ENCODE measurements at regions of chr9 and their contacts with region 1.

Region 1: DNA sequence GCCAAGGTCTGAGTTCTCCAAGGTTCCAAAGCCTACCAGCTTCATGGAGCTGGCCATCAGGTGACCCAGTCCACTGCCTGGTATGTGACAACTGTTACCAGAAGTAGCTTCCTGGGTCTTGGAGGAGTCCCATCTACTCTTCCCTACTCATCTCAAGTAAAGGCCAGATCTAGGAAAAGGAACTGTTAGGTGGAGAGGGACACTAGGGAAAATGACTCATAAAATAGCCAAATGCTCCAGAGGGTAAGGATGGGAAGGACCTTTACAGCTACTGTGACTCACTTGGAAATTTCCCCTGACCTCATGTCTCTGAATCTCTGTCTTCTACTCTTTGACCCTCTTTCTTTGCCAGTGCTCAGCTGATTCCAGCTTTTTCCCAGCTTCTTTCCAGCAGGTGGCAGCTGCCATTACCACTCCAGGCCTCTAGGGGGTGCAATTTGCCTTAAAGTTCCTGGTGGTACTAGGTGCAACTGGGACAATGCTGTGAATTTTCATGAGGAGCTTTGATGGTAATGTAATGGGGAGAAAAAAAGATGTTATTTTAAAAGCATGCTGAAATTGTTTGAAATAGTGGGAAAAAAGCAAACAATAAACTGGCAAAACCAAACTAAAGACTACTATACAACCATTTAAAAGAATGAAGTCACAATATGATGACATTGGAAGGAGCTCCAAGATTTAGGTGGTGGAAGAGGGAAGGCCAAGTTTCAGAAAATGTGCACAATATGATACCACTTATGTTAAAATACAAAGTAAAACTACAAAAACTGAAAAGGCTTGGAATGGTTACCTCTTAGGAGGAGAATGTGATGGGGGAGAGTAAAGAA is 27.1 kb upstream of the MYORG start:
- DNase-seq: peak; percentile 72 to 75
- H3K4me3 ChIP-seq: no peak overlapping the region
- H3K27ac ChIP-seq: no peak overlapping the region
- H3K4me1 ChIP-seq: no peaks in the 10 kb centered on the region
- H3K27me3 ChIP-seq: no peaks in the 10 kb centered on the region
- CTCF ChIP-seq: peak; percentile 89 to 91

Region 2: DNA sequence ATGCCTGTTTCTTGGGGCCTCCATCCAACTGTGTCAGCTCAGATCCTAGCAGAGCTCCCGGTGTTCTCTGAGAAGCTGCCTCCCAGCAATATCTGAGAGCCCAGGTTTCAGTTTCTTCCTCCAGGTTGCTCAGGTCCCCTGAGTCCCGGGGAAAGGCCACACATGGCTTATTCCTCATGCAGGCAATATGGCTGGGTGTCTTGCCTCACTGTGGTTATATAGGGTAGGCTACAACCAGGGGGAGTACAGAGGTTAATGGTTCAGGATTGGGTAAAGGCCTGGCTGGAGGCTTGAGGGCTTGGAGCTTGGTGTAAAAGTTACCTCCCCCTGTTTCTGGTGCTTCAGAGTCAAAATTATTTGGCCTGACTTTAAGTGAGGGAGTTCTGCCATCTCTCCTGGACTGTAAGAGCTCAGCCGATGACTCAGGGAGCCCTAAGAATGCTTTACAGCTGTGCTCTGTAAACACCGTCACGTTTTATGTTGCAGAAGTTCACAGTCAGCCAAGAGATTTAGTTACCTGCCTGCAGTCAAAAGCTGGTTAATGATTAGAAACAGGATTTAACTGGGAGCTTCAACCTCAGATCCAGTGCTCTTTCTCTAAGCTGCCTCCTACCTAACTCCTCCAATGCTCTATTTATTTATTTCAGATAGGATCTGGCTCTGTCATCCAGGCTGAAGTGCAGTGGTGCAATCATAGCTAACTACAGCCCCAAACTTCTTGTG is 330.7 kb before region 1 on chr9:
- intact Hi-C with region 1: no loop called
- DNase-seq: no peak
- H3K4me3 ChIP-seq: no peak overlapping the region
- H3K27ac ChIP-seq: no peak overlapping the region
- H3K4me1 ChIP-seq: peaks cover 0 to 20% (median 0%) of the 10 kb centered on the region in 4 donors
- H3K27me3 ChIP-seq: no peaks in the 10 kb centered on the region
- CTCF ChIP-seq: no peak

Region 3: DNA sequence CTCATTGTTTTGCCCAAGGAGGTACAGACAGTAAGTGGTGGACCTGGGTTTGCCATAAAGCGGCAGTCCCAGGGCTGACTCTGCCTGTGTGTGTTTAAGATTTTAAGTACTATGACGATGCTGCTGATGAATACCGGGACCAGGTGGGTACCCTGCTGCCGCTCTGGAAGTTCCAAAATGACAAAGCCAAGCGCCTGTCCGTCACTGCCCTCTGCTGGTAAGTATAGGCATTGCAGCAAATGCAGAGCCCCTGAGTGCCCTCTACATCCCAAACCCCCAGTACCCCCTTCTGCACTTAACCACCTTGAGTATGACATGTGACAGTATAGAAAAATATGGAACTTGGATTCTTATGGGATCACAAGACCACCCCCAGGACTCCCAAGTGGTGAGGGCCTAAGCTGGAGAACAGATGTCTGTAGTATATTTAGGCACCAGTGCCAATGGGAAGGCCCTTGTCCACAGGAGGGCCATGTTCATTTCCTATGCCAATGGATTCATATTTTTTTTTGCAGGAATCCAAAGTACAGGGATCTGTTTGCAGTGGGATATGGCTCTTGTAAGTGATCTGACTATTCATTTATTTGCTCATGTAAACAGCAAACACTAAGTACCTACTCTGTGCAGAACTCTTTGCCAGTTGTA is 97.0 kb after region 1 on chr9:
- intact Hi-C with region 1: loop called (anchors 5 kb)
- DNase-seq: peak in 1 of 2 donors; percentile 44
- H3K4me3 ChIP-seq: no peak overlapping the region
- H3K27ac ChIP-seq: no peak overlapping the region
- H3K4me1 ChIP-seq: peaks cover 0 to 26% (median 21%) of the 10 kb centered on the region in 4 donors
- H3K27me3 ChIP-seq: no peaks in the 10 kb centered on the region
- CTCF ChIP-seq: peak; percentile 91 to 99